Left ventricle myocardium superior (tissue), 1 donor: ENCODE measurements at regions of chr13 and their contacts with region 1.

Region 1: DNA sequence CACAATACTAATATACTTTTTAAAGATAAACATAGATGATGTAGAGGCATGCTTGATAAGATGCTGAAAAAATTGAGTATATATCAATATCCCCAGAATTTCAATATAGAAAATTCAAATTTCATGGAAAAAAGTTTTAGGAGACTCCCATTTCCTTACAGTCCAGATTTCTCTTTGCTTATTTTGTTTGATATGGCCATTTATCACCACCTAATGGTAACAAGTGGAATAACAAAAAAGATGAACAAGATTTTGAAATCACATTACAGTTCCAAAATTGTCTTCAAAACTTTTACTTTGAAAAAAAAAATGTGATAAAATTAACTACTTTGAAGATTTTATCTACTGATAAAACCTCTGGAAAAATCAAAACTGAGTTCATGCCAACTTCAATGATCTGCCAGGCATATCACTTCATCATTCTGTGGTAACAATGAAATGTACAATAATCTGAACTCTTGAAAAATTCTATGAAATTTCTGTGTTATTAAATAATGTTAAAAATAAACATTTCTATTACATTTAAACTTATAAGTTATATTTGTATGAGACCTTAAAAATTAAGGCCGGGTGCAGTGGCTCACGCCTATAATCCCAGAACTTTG is 17.5 kb downstream of the MIPEP start:
- DNase-seq: no peak
- ATAC-seq: peak; percentile 41

Region 2: DNA sequence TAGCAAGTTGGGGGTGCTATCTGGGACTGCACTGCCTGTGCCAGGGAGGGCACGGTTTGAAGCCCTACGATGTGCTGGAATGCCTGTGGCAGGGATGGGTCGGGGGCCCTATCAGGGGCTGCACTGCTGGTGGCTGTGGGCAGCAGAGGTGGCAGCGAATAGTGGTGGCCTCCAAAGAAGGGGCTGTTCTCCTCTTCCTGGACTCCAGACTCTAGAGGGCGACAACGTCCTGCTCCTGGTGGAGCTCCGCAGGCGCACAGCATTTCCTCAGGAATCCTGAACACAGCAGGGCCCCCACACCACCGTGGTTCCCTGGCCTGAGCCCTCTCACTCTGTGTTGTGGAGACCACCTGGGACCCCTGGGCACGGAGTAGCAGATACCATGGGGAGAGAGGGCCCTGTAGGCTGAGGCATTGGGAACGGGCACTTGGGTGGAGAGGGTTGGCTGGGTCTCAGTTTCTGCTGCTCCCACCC is 155.9 kb before region 1 on chr13:
- intact Hi-C with region 1: loop called (anchors 10 kb)
- DNase-seq: no peak
- ATAC-seq: peak; percentile 32